Ascending aorta (tissue), 2 donors: ENCODE measurements at regions of chr14 and their contacts with region 1.

Region 1: GRCh38 chr14:81710234-81710845 is 176.7 kb upstream of the SEL1L start:
- DNase-seq: no peak
- H3K4me3 ChIP-seq: no peak overlapping the region
- H3K27ac ChIP-seq: no peak overlapping the region
- H3K4me1 ChIP-seq: no peaks in the 10 kb centered on the region
- H3K27me3 ChIP-seq: no peaks in the 10 kb centered on the region
- CTCF ChIP-seq: peak in 2 of 3 experiments; percentile 66

Region 2: DNA sequence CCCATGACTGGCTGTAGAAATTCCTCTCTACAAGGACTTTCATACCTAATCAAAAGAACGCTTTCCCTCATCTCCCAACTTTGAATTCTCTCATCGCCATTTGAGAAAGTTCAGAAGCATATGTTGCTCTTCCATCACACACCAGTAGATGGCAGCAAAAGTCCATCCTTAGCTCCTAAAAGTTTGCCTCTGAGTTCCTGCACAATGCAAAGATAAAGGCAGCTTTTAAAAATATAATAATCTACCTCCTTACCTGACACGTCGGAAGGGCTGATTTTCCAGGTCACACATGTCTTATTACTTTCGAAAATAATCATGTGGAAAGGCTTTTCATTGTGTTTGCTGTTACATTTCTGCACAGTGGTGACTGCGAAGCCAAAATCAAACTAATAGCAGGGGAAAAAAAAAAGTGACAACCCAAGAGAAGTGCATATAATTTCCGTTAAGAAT is 280.0 kb after region 1 on chr14:
- intact Hi-C with region 1: loop called (anchors 5 kb)
- DNase-seq: peak in 1 of 2 donors; percentile 67
- H3K4me3 ChIP-seq: no peak overlapping the region
- H3K27ac ChIP-seq: no peak overlapping the region
- H3K4me1 ChIP-seq: no peaks in the 10 kb centered on the region
- H3K27me3 ChIP-seq: no peaks in the 10 kb centered on the region
- CTCF ChIP-seq: peak; percentile 47 to 93 (median 92)